BJ (cell line): ENCODE measurements at regions of chr3 and their contacts with region 1.

Region 1: DNA sequence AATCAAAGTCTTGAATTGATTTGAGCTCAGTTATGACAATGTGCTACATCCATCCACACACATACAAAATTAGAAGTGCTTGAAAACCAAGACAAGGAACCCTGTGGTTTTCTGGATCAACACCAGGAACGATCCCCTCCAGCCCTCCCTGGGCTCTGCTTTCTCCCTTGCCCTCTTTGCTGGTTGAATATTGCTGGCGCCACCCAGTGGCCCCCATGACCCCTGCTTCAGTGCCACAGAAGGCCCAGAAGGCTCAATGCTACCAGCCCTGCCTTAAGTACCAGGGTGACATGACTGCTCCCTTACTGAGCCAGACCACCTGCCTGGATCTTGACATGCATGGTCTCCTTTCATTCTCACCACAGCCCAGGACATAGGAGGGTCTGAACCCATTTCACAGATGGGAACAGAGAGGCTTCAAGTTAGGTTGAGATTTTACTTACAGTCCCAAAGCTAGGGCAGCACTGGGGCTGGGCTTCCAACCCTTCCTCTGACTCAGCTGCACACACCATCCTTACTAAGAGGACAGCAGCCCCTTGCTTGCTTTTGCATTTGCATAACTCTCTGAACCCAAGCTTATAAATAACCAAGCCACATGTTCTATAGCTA is 15.0 kb downstream of the IL12A start:
- DNase-seq: no peak
- H3K4me3 ChIP-seq: no peak overlapping the region
- H3K27me3 ChIP-seq: no peaks in the 10 kb centered on the region
- CTCF ChIP-seq: peak; percentile 63

Region 2: GRCh38 chr3:159813822-159814523 is 189.7 kb before region 1 on chr3:
- CTCF ChIA-PET with region 1: interaction called, 43 read pairs
- POLR2A ChIA-PET with region 1: no interaction called
- DNase-seq: no peak
- H3K4me3 ChIP-seq: no peak overlapping the region
- H3K27me3 ChIP-seq: no peaks in the 10 kb centered on the region
- CTCF ChIP-seq: no peak

Region 3: DNA sequence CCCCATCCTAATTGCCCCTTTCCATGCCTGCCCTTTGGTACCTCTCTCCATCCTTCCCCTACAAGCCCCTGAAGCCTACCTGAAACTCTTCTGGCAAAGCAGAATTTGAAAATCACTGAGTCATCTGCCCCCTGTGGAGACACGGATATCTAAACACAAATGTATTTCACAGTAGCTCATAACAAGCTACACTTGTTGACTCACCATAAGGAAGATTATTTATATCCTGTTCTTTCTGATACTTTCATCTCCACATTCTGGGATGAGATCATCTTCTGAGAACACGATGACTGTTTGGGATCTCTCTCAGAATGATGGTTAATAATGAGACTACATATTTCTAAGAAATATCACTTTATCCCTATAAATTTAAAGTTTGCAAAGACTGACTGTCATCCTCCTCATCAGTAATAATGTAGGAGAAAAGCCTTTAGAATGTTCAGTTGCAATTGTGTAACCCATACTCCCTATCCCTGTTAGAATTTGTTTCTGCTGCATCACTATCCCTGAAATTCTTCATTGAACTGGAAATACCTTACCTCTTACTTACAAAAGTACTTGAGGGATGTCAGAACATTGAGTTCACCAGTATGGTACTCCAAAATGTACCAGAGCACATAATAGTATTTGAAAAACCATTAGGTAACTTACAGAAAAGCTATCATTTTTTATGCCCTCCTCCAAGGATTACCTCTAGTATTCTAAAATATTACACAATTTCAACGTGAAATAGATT is 131.1 kb before region 1 on chr3:
- CTCF ChIA-PET with region 1: interaction called, 12 read pairs
- POLR2A ChIA-PET with region 1: no interaction called
- DNase-seq: peak; percentile 55
- H3K4me3 ChIP-seq: no peak overlapping the region
- H3K27me3 ChIP-seq: no peaks in the 10 kb centered on the region
- CTCF ChIP-seq: peak; percentile 33; the same call in 1 of the 2 replicates

Region 4: GRCh38 chr3:159897331-159898075 is 106.1 kb before region 1 on chr3:
- CTCF ChIA-PET with region 1: interaction called, 72 read pairs
- POLR2A ChIA-PET with region 1: no interaction called
- DNase-seq: peak; percentile 31
- H3K4me3 ChIP-seq: no peak overlapping the region
- H3K27me3 ChIP-seq: no peaks in the 10 kb centered on the region
- CTCF ChIP-seq: no peak

Region 5: DNA sequence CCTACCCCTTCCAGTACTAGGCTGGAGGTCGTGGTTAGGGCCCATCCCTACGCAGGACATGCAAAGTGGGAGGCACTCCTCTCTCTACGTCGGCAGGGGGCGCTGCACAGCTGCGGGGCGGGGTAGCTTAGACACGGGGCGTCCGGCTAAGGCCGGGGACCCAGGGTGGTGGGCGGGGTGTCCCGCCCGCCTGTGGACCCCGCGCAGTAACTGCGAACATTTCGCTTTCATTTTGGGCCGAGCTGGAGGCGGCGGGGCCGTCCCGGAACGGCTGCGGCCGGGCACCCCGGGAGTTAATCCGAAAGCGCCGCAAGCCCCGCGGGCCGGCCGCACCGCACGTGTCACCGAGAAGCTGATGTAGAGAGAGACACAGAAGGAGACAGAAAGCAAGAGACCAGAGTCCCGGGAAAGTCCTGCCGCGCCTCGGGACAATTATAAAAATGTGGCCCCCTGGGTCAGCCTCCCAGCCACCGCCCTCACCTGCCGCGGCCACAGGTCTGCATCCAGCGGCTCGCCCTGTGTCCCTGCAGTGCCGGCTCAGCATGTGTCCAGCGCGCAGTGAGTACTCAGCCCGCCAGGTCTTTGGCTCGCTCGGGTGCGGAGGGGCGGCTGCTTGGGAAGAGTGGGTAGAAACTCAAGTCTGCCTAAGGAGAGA is 14.9 kb before region 1 on chr3 and contains the start of gene IL12A:
- CTCF ChIA-PET with region 1: interaction called, 91 read pairs
- POLR2A ChIA-PET with region 1: no interaction called
- DNase-seq: no peak
- H3K4me3 ChIP-seq: peak within 1 kb of the TSS; percentile 64
- H3K27me3 ChIP-seq: no peaks in the 10 kb centered on the region
- CTCF ChIP-seq: peak; percentile 98
- polyA plus RNA-seq, gene IL12A: 0.38 and 0.50 TPM in 2 replicates

Region 6: DNA sequence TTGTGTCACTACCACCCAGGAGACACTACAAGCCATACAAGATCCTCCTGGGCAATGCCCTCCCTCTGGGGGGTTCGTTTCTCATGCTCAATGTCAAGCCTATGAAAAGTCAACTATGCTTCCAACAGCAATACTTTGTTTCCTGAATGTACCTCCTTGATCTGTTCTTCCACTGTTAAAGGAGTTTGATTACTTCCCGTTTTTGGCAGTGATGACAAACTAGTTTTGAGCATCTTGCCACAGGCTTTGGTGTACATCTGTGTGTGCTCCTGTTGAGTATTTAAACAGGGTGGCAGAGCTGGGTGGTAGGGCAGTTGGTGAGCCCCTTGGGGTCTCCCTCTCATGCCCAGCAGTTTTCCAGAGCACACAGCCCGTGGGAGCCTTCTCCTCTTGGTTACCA is 66.4 kb after region 1 on chr3:
- CTCF ChIA-PET with region 1: no interaction called
- POLR2A ChIA-PET with region 1: no interaction called
- DNase-seq: no peak
- H3K4me3 ChIP-seq: no peak overlapping the region
- H3K27me3 ChIP-seq: peaks cover 4% of the 10 kb centered on the region
- CTCF ChIP-seq: no peak

Region 7: GRCh38 chr3:160287666-160288065 is 284.0 kb after region 1 on chr3:
- CTCF ChIA-PET with region 1: no interaction called
- POLR2A ChIA-PET with region 1: no interaction called
- DNase-seq: no peak
- H3K4me3 ChIP-seq: no peak overlapping the region
- H3K27me3 ChIP-seq: no peaks in the 10 kb centered on the region
- CTCF ChIP-seq: no peak

Region 8: DNA sequence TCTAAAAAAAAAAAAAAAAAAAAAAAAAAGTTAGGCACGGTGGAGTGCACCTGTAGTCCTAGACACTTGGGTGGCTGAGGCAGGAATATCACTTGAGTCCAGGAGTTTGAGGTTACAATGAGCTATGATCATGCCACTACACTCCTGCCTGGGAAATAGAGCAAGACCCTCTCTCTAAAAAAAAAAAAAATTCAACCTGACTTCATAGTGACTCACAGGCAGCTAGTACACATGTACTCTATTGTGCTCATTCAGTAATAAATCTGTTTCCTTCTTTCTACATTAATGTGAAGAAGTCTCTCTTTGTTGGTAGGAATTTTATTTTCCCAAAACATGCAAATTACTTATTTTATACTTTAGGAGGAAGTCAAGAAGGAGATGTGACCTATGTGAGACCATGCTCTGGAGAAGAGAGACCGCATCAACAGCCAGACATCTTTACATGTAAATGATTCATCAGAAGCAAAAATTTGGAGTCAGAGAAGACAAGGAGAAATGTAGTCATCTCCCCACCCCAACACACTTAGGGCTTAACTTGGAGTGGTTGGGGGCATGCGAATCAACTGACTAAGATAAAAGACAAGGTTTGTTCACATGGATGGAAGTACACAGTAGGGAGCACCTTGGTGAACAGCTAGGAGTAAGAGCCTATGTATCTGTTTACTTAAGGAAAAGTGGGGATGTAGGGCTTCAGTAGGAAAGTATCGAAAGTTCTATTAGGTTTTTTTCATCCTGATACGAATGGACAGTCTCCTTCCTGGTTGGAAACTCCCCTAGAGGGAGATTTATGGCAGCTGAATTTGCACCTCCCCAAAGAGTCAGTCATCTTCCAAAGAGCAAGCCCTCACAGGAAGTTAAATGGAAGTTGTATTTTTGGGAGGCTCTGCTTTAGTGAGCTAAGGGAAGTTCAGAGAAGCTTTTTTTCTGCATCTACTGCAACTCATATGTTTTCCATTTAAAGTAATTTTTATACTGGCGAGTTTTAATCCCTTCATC is 1194.5 kb after region 1 on chr3:
- CTCF ChIA-PET with region 1: no interaction called
- POLR2A ChIA-PET with region 1: no interaction called
- DNase-seq: no peak
- H3K4me3 ChIP-seq: no peak overlapping the region
- H3K27me3 ChIP-seq: no peaks in the 10 kb centered on the region
- CTCF ChIP-seq: no peak